ENCODE measurements at regions of chr11 and their contacts with region 1.

Region 1: GRCh38 chr11:118791111-118791965 is at the start of gene DDX6:
- DNase-seq: peak; percentile 85
- H3K4me3 Mint-ChIP-seq: peak within 1 kb of the TSS; percentile 99
- H3K27ac Mint-ChIP-seq: peak within 1 kb of the TSS; percentile 100
- H3K4me1 Mint-ChIP-seq: peaks cover 5% of the 10 kb centered on the region
- H3K27me3 Mint-ChIP-seq: no peaks in the 10 kb centered on the region
- CTCF ChIP-seq: no peak
- total RNA-seq, gene DDX6: 111 and 143 TPM in 2 replicates

Region 2: DNA sequence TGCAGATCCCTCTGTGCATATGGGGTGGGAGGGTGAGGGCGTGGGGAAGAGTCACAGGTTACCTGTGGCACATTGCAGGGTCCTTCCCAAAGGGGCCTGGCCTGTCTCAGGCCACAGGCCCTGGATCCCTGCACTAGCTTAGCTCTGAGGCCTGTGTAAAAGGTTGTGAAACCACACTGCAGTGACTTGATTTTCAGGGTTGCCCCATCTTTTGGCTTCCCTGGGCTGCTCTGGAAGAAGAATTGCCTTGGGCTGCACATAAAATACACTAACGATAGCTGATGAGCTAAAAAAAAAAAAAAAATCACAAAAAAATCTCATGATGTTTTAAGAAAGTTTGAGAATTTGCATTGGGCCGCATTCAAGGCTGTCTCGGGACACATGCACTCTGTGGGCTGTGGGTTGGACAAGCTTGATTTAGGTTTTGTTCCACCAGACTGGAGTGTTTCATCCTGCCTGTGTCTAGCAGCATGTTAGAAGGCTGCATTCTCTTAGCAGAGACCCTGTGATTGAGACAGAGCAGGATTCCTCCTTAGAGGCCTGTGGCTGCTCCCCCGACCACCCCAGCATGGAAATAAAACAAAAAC is 76.0 kb before region 1 on chr11:
- CTCF ChIA-PET with region 1: no interaction called
- POLR2A ChIA-PET with region 1: interaction called, 17 read pairs
- intact Hi-C with region 1: no loop called
- DNase-seq: peak; percentile 25
- H3K4me3 Mint-ChIP-seq: no peak overlapping the region
- H3K27ac Mint-ChIP-seq: no peak overlapping the region
- H3K4me1 Mint-ChIP-seq: peaks cover 30% of the 10 kb centered on the region
- H3K27me3 Mint-ChIP-seq: no peaks in the 10 kb centered on the region
- CTCF ChIP-seq: no peak

Region 3: DNA sequence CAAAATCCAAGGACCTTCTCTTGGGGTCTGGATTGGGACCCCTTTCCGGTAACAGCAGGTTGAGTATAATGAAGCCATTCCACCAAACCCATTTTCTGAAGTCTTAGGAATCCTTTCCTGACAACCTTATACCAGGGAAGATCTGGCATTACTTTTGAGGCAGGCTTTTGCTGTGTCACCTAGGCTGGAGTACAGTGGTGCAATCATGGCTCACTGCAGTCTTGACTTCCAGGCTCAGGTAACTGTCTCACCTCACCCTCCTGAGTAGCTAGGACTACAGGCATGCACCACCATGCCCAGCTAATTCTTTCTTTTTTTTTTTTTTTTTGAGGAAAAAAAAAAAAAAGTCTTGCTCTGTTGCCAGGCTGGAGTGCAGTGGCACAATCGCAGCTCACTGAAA is 56.1 kb before region 1 on chr11:
- CTCF ChIA-PET with region 1: no interaction called
- POLR2A ChIA-PET with region 1: no interaction called
- intact Hi-C with region 1: no loop called
- DNase-seq: peak; percentile 32
- H3K4me3 Mint-ChIP-seq: no peak overlapping the region
- H3K27ac Mint-ChIP-seq: no peak overlapping the region
- H3K4me1 Mint-ChIP-seq: peaks cover 5% of the 10 kb centered on the region
- H3K27me3 Mint-ChIP-seq: no peaks in the 10 kb centered on the region
- CTCF ChIP-seq: no peak

Region 4: GRCh38 chr11:118771547-118772288 is 19.6 kb before region 1 on chr11:
- CTCF ChIA-PET with region 1: interaction called, 9 read pairs
- POLR2A ChIA-PET with region 1: interaction called, 15 read pairs
- intact Hi-C with region 1: no loop called
- DNase-seq: no peak
- H3K4me3 Mint-ChIP-seq: no peak overlapping the region
- H3K27ac Mint-ChIP-seq: no peak overlapping the region
- H3K4me1 Mint-ChIP-seq: peaks cover 24% of the 10 kb centered on the region
- H3K27me3 Mint-ChIP-seq: no peaks in the 10 kb centered on the region
- CTCF ChIP-seq: no peak

Region 5: GRCh38 chr11:118845369-118845768 is 54.0 kb after region 1 on chr11:
- CTCF ChIA-PET with region 1: interaction called, 5 read pairs
- POLR2A ChIA-PET with region 1: interaction called, 21 read pairs
- intact Hi-C with region 1: loop called (anchors 5 kb)
- DNase-seq: peak; percentile 85
- H3K4me3 Mint-ChIP-seq: peak overlapping the region; percentile 15
- H3K27ac Mint-ChIP-seq: peak overlapping the region; percentile 79
- H3K4me1 Mint-ChIP-seq: peaks cover 25% of the 10 kb centered on the region
- H3K27me3 Mint-ChIP-seq: no peaks in the 10 kb centered on the region
- CTCF ChIP-seq: no peak

Region 6: GRCh38 chr11:118907051-118908042 is 116.0 kb after region 1 on chr11:
- CTCF ChIA-PET with region 1: interaction called, 20 read pairs
- POLR2A ChIA-PET with region 1: interaction called, 56 read pairs
- intact Hi-C with region 1: loop called (anchors 5 kb)
- DNase-seq: peak; percentile 85
- H3K4me3 Mint-ChIP-seq: peak overlapping the region; percentile 33
- H3K27ac Mint-ChIP-seq: no peak overlapping the region
- H3K4me1 Mint-ChIP-seq: peaks cover 47% of the 10 kb centered on the region
- H3K27me3 Mint-ChIP-seq: no peaks in the 10 kb centered on the region
- CTCF ChIP-seq: peak; percentile 94

Region 7: GRCh38 chr11:118956094-118956846 is 164.9 kb after region 1 on chr11 and contains the start of gene UPK2:
- CTCF ChIA-PET with region 1: interaction called, 5 read pairs
- POLR2A ChIA-PET with region 1: interaction called, 4 read pairs
- intact Hi-C with region 1: loop called (anchors 1 kb)
- DNase-seq: peak; percentile 84
- H3K4me3 Mint-ChIP-seq: no peak within 1 kb of the TSS
- H3K27ac Mint-ChIP-seq: peak within 1 kb of the TSS; percentile 47
- H3K4me1 Mint-ChIP-seq: peaks cover 8% of the 10 kb centered on the region
- H3K27me3 Mint-ChIP-seq: peaks cover 12% of the 10 kb centered on the region
- CTCF ChIP-seq: peak; percentile 89
- total RNA-seq, gene UPK2: not detected in 2 replicates

Measured in MCF 10A (cell line).